MCF 10A (cell line): ENCODE measurements at regions of chr12 and their contacts with region 1.

Region 1: GRCh38 chr12:57632694-57633477 is at the start of gene B4GALNT1:
- DNase-seq: peak; percentile 58
- H3K4me3 Mint-ChIP-seq: peak within 1 kb of the TSS; percentile 52
- H3K27ac Mint-ChIP-seq: no peak within 1 kb of the TSS
- H3K4me1 Mint-ChIP-seq: peaks cover 5% of the 10 kb centered on the region
- H3K27me3 Mint-ChIP-seq: no peaks in the 10 kb centered on the region
- CTCF ChIP-seq: peak; percentile 84
- total RNA-seq, gene B4GALNT1: 0.29 and 0.40 TPM in 2 replicates

Region 2: GRCh38 chr12:57576613-57577160 is 56.2 kb before region 1 on chr12:
- CTCF ChIA-PET with region 1: interaction called, 19 read pairs
- POLR2A ChIA-PET with region 1: interaction called, 6 read pairs
- intact Hi-C with region 1: no loop called
- DNase-seq: peak; percentile 23
- H3K4me3 Mint-ChIP-seq: no peak overlapping the region
- H3K27ac Mint-ChIP-seq: no peak overlapping the region
- H3K4me1 Mint-ChIP-seq: no peaks in the 10 kb centered on the region
- H3K27me3 Mint-ChIP-seq: no peaks in the 10 kb centered on the region
- CTCF ChIP-seq: no peak